ENCODE measurements at regions of chr11 and their contacts with region 1.

Region 1: DNA sequence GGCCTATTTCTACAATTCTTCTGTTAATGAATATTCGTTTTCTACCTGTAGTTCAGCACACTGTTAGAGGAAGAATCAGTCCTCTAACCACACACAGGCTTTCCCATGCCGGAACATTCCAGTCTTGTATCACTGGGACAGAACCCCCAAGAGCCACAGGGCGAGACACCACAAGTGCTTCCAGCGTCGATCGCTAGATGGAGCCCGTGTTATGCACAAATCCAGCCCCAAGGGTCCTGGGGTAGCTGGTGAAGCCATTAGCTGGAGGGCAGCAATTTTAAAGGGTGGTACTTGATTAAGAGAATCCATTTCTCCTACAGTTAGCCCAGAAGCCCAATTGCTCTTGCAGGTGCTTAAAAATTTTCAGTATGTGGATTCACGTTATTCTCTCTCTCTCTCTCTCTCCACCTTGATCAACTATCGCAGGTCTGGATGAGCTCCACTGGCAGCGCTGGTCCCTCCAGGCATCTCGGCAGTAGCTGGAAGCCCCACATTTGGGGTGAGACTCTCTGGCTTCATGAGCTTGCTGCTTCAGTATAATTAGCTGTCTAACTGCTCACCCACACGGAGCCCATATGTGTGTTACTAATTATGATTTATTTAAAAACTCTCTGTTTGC is 148.2 kb upstream of the SNX19 start:
- DNase-seq: peak; percentile 54 to 90 (median 74)

Region 2: GRCh38 chr11:131217313-131218310 is 153.1 kb after region 1 on chr11:
- intact Hi-C with region 1: loop called (anchors 10 kb)
- DNase-seq: peak in 20 of 42 donors; percentile 6 to 54 (median 32)

Region 3: DNA sequence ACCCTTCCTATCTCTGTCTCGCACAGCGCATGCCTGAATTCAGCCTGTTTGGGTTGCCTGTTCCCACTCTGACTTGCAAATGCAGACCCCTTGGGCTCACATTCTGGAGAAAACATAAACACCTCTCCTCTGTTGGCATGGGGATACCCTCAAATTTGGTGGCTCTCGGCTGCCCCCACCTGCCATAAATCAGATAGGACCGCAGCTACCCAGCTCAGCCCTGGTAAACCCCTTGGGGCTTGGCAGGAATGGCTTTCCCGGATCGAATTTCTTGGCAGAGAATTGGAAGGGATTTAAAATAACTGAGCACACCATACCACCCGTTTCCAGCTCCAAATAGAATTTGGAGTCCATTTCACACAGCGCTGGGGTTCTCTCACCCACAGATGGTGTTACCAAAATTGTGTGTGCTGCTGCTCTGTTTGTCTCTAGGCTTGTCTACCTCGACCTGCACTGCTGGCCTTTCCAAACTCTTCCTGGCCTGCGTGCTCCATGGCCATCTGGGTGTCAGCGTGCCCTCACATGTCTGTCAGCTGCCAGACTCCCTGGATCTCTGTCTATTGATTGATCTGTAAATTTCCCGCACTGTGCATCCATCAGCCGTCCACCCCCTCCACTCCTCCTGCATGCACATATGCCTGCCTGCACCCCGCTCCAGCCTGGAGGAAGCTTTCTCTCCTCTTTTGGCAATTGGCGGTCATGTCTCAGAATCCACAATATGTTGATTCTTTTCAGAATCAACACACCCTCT is 439.9 kb after region 1 on chr11:
- intact Hi-C with region 1: loop called (anchors 10 kb)
- DNase-seq: peak; percentile 36 to 89 (median 74)

Region 4: DNA sequence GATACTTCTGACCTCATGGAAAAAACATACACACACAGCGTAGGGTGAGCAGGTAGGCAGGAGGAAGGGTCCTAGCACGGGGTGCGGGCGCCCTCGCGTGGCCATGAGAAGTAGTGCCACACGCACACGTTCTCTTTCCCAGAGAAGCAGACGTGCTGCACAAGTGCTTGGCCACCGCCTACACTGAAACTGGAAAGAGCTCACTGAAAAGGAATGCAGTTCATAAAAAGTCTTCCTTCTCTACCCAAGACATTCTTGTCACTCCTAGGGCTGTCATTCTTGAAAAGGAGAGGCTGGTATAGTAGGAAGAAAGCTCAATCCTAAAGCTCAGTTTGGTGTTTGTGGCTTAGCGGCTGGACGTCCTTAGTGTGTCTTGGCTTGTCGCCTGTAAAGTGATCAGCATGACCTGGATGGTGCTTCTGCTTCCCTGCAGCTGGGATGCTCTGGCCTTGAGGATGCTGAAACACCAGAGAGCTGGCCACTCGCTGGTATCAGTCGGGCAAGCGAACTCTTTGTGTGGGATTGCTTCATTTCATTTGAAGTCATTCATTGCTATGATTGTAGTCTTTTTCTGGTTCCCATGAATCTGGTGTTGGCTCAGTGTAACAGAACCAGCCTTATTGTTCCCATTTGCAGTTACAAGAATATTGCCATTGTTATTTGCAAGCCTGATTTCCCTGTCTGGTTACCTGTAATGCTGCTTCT is 609.7 kb after region 1 on chr11:
- intact Hi-C with region 1: loop called (anchors 5 kb)
- DNase-seq: peak; percentile 51 to 96 (median 91)